Transverse colon (tissue), 4 donors: ENCODE measurements at regions of chr2 and their contacts with region 1.

Region 1: DNA sequence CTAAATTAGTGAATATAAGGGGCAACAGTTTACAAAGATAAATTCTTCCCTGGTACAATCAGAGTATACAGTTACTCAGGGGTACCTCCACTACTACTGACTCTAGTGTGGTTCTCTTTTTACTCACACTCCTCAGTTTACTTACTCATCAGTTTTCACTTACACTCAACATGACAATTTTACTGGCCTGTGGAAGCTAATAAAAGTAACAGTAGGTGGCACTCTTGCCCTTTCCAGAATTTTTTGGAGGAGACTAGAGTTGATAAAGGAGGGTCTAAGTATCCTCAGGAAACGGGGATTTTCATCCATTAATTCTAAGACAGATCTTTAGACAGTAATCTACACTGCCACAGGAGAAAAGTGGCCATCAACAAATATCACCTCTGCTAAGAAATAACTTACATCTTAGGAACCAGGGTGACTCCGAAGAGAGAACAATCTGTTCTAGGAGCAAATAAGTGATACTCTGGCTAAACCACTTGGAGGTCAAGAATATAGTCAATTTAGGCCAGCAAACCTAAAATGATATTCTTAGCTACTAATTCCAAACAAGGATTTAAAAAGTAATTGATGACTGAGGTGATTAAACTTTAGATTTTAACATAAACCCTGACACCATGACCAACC is 61.3 kb downstream of the ATL2 start:
- DNase-seq: no peak
- H3K4me3 ChIP-seq: no peak overlapping the region
- H3K27ac ChIP-seq: peak overlapping the region in 3 of 4 donors; percentile 8 to 56 (median 53)
- H3K4me1 ChIP-seq: peaks cover 0 to 15% (median 3%) of the 10 kb centered on the region in 4 donors
- H3K27me3 ChIP-seq: no peaks in the 10 kb centered on the region
- CTCF ChIP-seq: peak; percentile 50 to 65 (median 57)
- EP300 ChIP-seq: no peak
- POLR2A ChIP-seq: no peak

Region 2: DNA sequence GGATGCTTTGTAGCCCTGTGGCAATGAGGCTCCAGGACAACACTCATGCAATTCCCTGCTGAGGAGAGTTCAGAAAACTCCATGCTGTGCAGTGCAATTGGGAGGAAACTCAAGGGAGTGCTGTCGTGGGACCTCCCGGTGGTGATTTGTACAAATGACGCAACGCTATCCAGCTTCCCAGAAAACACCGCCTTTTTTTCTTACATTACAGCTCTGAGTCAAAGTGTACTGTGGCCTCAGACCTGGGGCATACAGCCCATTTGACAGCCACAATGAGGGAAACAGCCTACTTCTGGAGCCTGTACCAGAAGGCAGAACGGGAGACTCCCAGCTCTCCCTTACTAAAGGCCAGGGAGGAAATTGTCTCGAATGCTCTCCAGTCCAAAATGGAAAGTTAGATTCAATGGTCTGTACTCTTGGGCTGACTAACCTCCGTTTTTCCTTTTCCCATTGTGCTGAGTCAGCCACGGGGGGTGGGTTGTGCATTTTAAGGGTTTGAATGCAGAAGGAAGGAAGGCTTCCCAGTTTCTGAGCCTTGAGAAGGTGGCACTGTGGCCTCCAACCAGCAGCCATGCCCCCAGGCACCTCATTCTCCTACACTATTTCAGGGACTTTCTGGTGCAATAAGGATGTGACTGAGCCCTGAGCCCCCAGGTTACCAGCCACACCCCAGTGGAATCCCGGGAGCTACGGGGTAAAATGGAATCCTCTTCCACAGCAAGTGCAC is 223.5 kb before region 1 on chr2:
- in situ Hi-C with region 1: no loop called
- intact Hi-C with region 1: no loop called
- DNase-seq: no peak
- H3K4me3 ChIP-seq: no peak overlapping the region
- H3K27ac ChIP-seq: peak overlapping the region in 2 of 4 donors; percentile 28 to 30
- H3K4me1 ChIP-seq: peaks cover 4 to 8% (median 7%) of the 10 kb centered on the region in 4 donors
- H3K27me3 ChIP-seq: no peaks in the 10 kb centered on the region
- CTCF ChIP-seq: no peak
- EP300 ChIP-seq: no peak
- POLR2A ChIP-seq: no peak

Region 3: GRCh38 chr2:38344813-38345212 is 29.0 kb after region 1 on chr2:
- in situ Hi-C with region 1: no loop called
- intact Hi-C with region 1: loop called (anchors 1 kb)
- DNase-seq: no peak
- H3K4me3 ChIP-seq: no peak overlapping the region
- H3K27ac ChIP-seq: no peak overlapping the region
- H3K4me1 ChIP-seq: peaks cover 0 to 10% (median 0%) of the 10 kb centered on the region in 4 donors
- H3K27me3 ChIP-seq: no peaks in the 10 kb centered on the region
- CTCF ChIP-seq: no peak
- EP300 ChIP-seq: no peak
- POLR2A ChIP-seq: no peak

Region 4: GRCh38 chr2:38508311-38509039 is 192.7 kb after region 1 on chr2:
- in situ Hi-C with region 1: loop called (anchors 5 to 25 kb)
- intact Hi-C with region 1: no loop called
- DNase-seq: peak; percentile 91
- H3K4me3 ChIP-seq: no peak overlapping the region
- H3K27ac ChIP-seq: peak overlapping the region; percentile 38 to 74 (median 58)
- H3K4me1 ChIP-seq: peaks cover 0 to 11% (median 9%) of the 10 kb centered on the region in 4 donors
- H3K27me3 ChIP-seq: no peaks in the 10 kb centered on the region
- CTCF ChIP-seq: peak; percentile 25 to 43 (median 41)
- EP300 ChIP-seq: no peak
- POLR2A ChIP-seq: no peak

Region 5: DNA sequence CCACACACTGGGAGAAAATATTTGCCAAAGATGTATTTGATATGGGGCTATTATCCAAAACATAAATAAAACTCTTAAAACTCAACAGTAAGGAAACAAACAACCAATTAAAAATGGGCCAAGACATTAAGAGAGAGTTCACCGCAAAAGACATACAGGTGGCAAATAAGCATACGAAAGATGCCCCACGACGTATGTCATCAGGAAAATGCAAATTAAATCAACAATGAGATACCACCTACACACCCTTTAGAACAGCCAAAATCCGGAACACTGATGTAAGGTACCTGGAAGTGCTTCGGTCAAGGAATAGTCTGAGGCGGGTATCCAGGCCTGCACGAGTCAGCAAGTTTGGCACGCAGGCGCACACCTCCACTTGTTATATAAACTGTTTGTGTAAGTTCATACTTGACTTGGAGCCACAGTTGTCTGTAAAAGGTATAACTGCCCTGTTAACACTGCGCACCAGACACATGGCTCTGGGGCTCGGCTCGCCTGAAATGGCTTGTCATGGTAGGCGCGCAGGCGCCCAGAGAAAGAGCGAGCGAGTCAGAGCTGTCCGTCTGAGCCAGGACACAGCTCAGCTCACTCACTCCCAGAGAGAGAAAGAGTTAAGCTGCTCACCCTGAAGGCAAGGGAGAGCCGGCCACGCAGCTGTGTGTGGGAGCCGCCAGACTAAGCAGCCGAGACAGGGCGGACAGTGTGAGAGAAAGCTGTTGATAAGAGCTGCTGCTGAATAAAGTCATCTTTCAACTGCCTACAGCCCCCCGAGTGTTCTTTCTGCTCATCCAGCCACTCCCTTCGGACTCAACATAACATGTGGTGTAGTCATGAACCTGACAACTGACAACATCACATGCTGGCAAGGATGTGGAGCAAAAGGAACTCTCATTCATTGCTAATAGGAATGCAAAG is 199.6 kb after region 1 on chr2:
- in situ Hi-C with region 1: loop called in 2 of 4 experiments (anchors 5 to 25 kb)
- intact Hi-C with region 1: no loop called
- DNase-seq: peak; percentile 31
- H3K4me3 ChIP-seq: peak overlapping the region in 2 of 4 donors; percentile 0 to 13
- H3K27ac ChIP-seq: peak overlapping the region; percentile 58 to 85 (median 76)
- H3K4me1 ChIP-seq: peaks cover 0 to 6% (median 0%) of the 10 kb centered on the region in 4 donors
- H3K27me3 ChIP-seq: no peaks in the 10 kb centered on the region
- CTCF ChIP-seq: no peak
- EP300 ChIP-seq: no peak
- POLR2A ChIP-seq: no peak

Region 6: DNA sequence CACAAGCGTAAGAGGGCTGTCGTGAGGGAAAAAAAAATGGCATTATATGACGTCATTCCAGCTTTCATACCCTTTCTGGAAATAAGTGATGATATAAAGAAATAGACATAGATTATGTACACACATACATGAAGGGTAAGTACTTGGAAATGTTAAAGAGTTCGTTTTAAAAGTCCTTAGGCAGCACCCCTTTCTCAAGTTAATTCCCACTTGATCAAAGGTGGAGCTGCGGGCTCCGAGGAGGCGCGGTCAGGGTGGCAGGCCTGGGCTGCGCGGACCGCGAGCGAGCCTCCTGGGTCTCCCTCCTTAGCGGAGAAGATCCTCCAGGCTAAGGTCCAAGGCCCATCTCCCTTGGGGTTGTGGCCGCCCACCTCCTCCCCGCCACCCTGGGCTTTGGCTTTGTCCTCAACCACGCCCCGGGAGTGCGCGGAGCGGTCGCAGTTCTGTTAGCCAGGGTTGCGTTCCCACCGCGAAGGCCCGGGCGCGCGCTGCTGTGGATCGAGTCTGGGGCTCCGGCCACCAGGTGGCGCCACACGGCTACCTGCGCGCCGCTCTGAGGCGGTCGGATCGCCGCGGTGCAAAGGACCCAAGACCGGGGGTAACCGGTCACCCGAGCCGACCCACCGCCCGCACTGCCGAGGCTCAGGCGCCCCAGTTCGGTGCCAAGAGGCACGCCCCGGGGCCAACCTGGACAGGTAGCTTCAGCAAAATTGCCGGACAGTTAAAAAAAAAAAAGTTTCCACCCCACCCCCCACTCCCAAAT is 220.1 kb after region 1 on chr2:
- in situ Hi-C with region 1: no loop called
- intact Hi-C with region 1: loop called (anchors 10 kb)
- DNase-seq: peak; percentile 86
- H3K4me3 ChIP-seq: peak overlapping the region; percentile 34 to 60 (median 48)
- H3K27ac ChIP-seq: peak overlapping the region; percentile 58 to 80 (median 68)
- H3K4me1 ChIP-seq: peaks cover 5 to 27% (median 20%) of the 10 kb centered on the region in 4 donors
- H3K27me3 ChIP-seq: no peaks in the 10 kb centered on the region
- CTCF ChIP-seq: peak; percentile 85 to 97 (median 93)
- EP300 ChIP-seq: no peak
- POLR2A ChIP-seq: no peak

Region 7: GRCh38 chr2:38734299-38735058 is 418.7 kb after region 1 on chr2:
- in situ Hi-C with region 1: loop called in 3 of 4 experiments (anchors 10 to 25 kb)
- intact Hi-C with region 1: no loop called
- DNase-seq: no peak
- H3K4me3 ChIP-seq: no peak overlapping the region
- H3K27ac ChIP-seq: peak overlapping the region; percentile 23 to 74 (median 72)
- H3K4me1 ChIP-seq: peaks cover 3 to 37% (median 9%) of the 10 kb centered on the region in 4 donors
- H3K27me3 ChIP-seq: no peaks in the 10 kb centered on the region
- CTCF ChIP-seq: no peak
- EP300 ChIP-seq: no peak
- POLR2A ChIP-seq: no peak

Region 8: DNA sequence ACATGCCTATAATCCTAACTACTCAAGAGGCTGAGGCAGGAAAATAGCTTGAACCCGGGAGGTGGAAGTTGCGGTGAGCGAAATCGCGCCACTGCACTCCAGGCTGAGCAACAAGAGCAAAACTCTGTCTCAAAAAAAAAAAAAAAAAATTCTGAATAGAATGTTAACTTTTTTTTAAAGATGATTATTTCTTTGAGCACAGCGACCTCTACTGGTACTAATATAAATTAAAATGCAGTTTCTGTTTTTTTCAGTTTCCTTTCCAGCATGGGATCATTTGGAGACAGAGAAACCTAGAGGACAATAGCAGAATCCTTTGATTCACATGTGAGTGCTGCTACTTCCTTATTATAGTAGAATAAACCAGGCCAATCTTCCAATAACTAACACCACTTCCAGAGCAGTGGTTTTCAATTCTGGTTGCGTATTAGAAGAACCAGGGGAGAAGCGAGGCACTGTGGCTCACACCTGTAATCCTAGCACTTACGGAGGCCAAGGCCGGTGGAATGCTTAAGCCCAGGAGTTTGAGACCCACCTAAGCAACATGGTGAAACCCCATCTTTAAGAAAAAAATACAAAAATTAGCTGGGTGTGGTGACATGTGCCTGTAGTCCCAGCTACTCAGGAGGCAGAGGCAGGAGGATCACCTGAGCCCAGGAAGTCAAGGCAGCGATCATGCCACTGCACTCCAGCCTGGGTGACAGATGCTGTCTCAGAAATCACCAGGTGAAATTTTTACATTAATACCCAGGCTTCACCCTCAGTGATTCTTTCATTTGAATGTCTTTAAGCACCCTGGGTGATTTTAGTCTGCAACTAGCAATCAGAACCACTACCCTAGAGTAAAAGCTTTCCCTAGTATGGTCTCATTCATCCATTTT is 425.3 kb after region 1 on chr2:
- in situ Hi-C with region 1: loop called in 3 of 4 experiments (anchors 10 to 25 kb)
- intact Hi-C with region 1: loop called (anchors 5 kb)
- DNase-seq: no peak
- H3K4me3 ChIP-seq: peak overlapping the region in 1 of 4 donors; percentile 16
- H3K27ac ChIP-seq: peak overlapping the region; percentile 79 to 83 (median 80)
- H3K4me1 ChIP-seq: peaks cover 5 to 71% (median 37%) of the 10 kb centered on the region in 4 donors
- H3K27me3 ChIP-seq: no peaks in the 10 kb centered on the region
- CTCF ChIP-seq: peak; percentile 63 to 94 (median 82)
- EP300 ChIP-seq: no peak
- POLR2A ChIP-seq: no peak